Activated CD4-positive, alpha-beta memory T cell treated with anti-CD3 and anti-CD28 coated beads, Interleukin-2, amount 10 ng/mL, durations not matched to agents 7 days and 5 days (primary cell): ENCODE measurements at regions of chr19 and their contacts with region 1.

Region 1: GRCh38 chr19:36850559-36851442 is at the start of gene ZNF345:
- DNase-seq: peak; percentile 89
- H3K4me3 Mint-ChIP-seq: no peak within 1 kb of the TSS
- H3K27ac Mint-ChIP-seq: no peak within 1 kb of the TSS
- H3K4me1 Mint-ChIP-seq: peaks cover 6% of the 10 kb centered on the region
- H3K27me3 Mint-ChIP-seq: no peaks in the 10 kb centered on the region
- total RNA-seq, gene ZNF345: 6.0 to 6.3 TPM

Region 2: GRCh38 chr19:36805364-36805763 is 45.4 kb before region 1 on chr19:
- CTCF ChIA-PET with region 1: no interaction called
- POLR2A ChIA-PET with region 1: no interaction called
- DNase-seq: no peak
- H3K4me3 Mint-ChIP-seq: no peak overlapping the region
- H3K27ac Mint-ChIP-seq: no peak overlapping the region
- H3K4me1 Mint-ChIP-seq: no peaks in the 10 kb centered on the region
- H3K27me3 Mint-ChIP-seq: no peaks in the 10 kb centered on the region

Region 3: DNA sequence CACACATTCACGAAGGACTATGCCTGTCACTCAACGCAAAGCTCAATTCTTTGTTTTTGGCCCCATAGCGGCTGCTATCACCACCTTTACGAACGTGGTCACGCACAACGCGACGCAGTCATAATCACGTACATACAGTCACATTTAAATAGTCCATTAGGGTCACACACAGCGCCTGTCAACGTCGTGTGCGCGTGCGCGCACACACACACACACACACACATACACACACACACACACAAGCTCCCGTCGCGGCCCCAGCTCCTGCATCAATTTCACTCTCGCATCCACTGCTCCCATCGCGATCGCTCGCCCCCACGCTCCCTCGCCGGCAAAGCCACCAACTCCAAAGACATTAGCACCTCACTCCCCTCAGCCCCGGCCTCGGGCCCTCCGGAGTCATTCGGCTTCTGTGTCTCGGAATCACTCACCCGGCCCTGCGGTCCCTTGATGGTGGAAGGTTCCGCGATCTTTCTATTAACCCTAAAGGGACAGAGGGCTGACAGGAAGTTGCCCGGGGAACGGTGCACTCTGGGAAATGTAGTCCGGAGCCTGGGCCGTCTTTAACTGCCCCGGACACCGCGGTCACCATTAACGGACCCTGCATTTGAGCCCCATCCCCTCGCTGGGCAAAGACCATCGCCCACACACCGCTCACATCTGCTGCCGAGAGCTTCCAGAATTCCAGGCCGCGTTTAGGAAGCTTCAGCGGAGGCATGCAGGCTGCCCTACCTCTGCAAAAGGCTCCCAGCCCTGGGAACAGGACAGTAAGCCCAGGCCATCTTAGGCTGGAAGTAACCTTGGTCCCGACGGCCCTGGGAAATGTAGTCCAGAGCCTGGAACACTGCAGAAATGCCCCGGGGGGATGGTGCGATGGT is 12.7 kb before region 1 on chr19 and contains the start of gene ZNF790:
- CTCF ChIA-PET with region 1: interaction called, 12 read pairs
- POLR2A ChIA-PET with region 1: interaction called, 80 read pairs
- DNase-seq: peak; percentile 87
- H3K4me3 Mint-ChIP-seq: no peak within 1 kb of the TSS
- H3K27ac Mint-ChIP-seq: no peak within 1 kb of the TSS
- H3K4me1 Mint-ChIP-seq: peaks cover 7% of the 10 kb centered on the region
- H3K27me3 Mint-ChIP-seq: no peaks in the 10 kb centered on the region
- total RNA-seq, gene ZNF790: 8.9 to 9.5 TPM

Region 4: DNA sequence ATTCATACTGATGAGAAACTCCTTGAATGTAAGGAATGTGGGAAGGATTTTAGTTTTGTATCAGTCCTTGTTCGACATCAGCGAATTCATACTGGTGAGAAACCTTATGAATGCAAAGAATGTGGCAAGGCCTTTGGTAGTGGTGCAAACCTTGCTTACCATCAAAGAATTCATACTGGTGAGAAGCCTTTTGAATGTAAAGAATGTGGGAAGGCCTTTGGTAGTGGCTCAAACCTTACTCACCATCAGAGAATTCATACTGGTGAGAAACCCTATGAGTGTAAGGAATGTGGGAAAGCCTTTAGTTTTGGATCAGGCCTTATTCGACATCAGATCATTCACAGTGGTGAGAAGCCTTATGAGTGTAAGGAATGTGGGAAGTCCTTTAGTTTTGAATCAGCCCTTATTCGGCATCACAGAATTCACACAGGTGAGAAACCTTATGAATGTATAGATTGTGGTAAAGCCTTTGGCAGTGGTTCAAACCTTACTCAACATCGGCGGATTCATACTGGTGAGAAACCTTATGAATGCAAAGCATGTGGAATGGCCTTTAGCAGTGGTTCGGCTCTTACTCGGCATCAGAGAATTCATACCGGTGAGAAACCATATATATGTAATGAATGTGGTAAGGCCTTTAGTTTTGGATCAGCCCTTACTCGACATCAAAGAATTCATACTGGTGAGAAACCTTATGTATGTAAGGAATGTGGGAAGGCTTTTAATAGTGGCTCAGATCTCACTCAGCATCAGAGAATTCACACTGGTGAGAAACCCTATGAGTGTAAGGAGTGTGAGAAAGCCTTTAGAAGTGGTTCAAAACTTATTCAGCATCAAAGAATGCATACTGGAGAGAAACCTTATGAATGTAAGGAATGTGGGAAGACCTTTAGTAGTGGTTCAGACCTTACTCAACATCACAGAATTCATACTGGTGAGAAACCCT is 26.5 kb after region 1 on chr19:
- CTCF ChIA-PET with region 1: no interaction called
- POLR2A ChIA-PET with region 1: no interaction called
- DNase-seq: no peak
- H3K4me3 Mint-ChIP-seq: no peak overlapping the region
- H3K27ac Mint-ChIP-seq: no peak overlapping the region
- H3K4me1 Mint-ChIP-seq: no peaks in the 10 kb centered on the region
- H3K27me3 Mint-ChIP-seq: no peaks in the 10 kb centered on the region

Region 5: DNA sequence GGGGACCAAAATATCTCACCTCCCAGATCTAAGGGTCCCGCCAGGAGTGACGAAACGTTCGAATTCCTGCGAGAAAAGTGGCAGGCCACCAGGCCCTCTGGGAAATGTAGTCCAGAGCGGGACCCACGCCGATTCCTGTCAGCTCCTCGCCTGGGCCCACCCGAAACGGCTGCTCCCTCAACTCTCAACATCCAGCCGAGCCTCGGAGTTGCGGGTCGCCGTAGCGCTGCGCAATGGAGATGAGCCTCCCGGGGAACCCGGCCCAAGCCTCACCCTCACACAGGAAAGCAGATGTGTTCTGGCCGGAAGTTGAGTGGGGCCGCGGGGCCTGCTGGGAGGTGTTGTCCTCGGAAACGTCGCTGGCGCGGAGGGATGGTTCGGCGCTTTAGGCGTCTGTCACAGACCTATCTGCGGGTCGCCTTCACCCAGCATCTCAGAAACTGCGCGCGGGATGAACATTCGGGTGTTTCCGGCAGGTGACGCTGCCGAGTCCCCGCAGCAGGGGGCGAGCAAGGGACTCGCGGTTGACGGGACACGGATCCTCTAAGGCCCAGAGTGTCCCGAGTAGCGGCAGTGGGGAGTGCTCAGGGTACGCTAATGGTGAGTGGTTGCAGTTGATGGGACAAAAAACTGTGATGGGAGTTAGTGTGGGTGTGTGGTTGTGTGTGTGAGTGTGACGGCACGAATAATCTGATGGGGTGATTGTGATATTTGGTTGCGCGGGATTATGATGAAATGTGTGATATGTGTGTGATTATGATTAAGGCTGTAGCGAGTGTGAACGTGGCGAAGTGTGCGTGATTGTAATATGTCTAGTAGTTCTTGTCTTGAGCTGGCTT is 65.4 kb after region 1 on chr19 and contains the starts of genes ZNF568 and ZNF829:
- CTCF ChIA-PET with region 1: interaction called, 6 read pairs
- POLR2A ChIA-PET with region 1: interaction called, 16 read pairs
- DNase-seq: peak; percentile 95
- H3K4me3 Mint-ChIP-seq: peak within 1 kb of the TSS; percentile 94
- H3K27ac Mint-ChIP-seq: peak within 1 kb of the TSS; percentile 97
- H3K4me1 Mint-ChIP-seq: peaks cover 33% of the 10 kb centered on the region
- H3K27me3 Mint-ChIP-seq: no peaks in the 10 kb centered on the region
- total RNA-seq, gene ZNF568: 6.3 to 7.2 TPM
- total RNA-seq, gene ZNF829: 4.3 TPM